ENCODE measurements at regions of chr20 and their contacts with region 1.

Region 1: GRCh38 chr20:44866703-44867335 is 18.7 kb upstream of the YWHAB start:
- DNase-seq: no peak
- ATAC-seq: no peak
- H3K4me3 ChIP-seq: no peak overlapping the region
- H3K27ac ChIP-seq: no peak overlapping the region
- H3K4me1 ChIP-seq: no peaks in the 10 kb centered on the region
- H3K27me3 ChIP-seq: peaks cover 3 to 33% of the 10 kb centered on the region in 2 experiments; a peak in 4 of 5 replicates
- CTCF ChIP-seq: no peak
- EP300 ChIP-seq: no peak
- POLR2A ChIP-seq: no peak
- RAD21 ChIP-seq: no peak

Region 2: GRCh38 chr20:44683263-44684046 is 183.4 kb before region 1 on chr20:
- CTCF ChIA-PET with region 1: interaction called, 44 read pairs
- POLR2A ChIA-PET with region 1: no interaction called
- in situ Hi-C with region 1: loop called (anchors 5 kb)
- intact Hi-C with region 1: loop called (anchors 1 kb)
- DNase-seq: peak; percentile 63
- ATAC-seq: peak; percentile 80
- H3K4me3 ChIP-seq: no peak overlapping the region
- H3K27ac ChIP-seq: no peak overlapping the region
- H3K4me1 ChIP-seq: peaks cover 15% of the 10 kb centered on the region
- H3K27me3 ChIP-seq: peaks cover 0 to 3% of the 10 kb centered on the region in 2 experiments; a peak in 2 of 5 replicates
- CTCF ChIP-seq: peak; percentile 85
- EP300 ChIP-seq: no peak
- POLR2A ChIP-seq: no peak
- RAD21 ChIP-seq: peak; percentile 52; the same call in 1 of the 2 replicates

Region 3: GRCh38 chr20:44739942-44740341 is 126.9 kb before region 1 on chr20:
- CTCF ChIA-PET with region 1: no interaction called
- POLR2A ChIA-PET with region 1: no interaction called
- in situ Hi-C with region 1: loop called (anchors 5 kb)
- intact Hi-C with region 1: no loop called
- DNase-seq: no peak
- ATAC-seq: no peak
- H3K4me3 ChIP-seq: no peak overlapping the region
- H3K27ac ChIP-seq: no peak overlapping the region
- H3K4me1 ChIP-seq: peaks cover 14% of the 10 kb centered on the region
- H3K27me3 ChIP-seq: peaks cover 7 to 30% of the 10 kb centered on the region in 2 experiments; a peak in 4 of 5 replicates
- CTCF ChIP-seq: no peak
- EP300 ChIP-seq: no peak
- POLR2A ChIP-seq: no peak
- RAD21 ChIP-seq: no peak

Region 4: GRCh38 chr20:44747166-44748004 is 119.4 kb before region 1 on chr20:
- CTCF ChIA-PET with region 1: interaction called, 41 read pairs
- POLR2A ChIA-PET with region 1: no interaction called
- in situ Hi-C with region 1: loop called (anchors 5 kb)
- intact Hi-C with region 1: loop called (anchors 1 kb)
- DNase-seq: peak; percentile 64
- ATAC-seq: peak; percentile 67
- H3K4me3 ChIP-seq: no peak overlapping the region
- H3K27ac ChIP-seq: no peak overlapping the region
- H3K4me1 ChIP-seq: peaks cover 26% of the 10 kb centered on the region
- H3K27me3 ChIP-seq: peaks cover 33 to 91% of the 10 kb centered on the region in 2 experiments
- CTCF ChIP-seq: peak; percentile 91
- EP300 ChIP-seq: no peak
- POLR2A ChIP-seq: no peak
- RAD21 ChIP-seq: peak; percentile 62; the same call in 1 of the 2 replicates

Region 5: DNA sequence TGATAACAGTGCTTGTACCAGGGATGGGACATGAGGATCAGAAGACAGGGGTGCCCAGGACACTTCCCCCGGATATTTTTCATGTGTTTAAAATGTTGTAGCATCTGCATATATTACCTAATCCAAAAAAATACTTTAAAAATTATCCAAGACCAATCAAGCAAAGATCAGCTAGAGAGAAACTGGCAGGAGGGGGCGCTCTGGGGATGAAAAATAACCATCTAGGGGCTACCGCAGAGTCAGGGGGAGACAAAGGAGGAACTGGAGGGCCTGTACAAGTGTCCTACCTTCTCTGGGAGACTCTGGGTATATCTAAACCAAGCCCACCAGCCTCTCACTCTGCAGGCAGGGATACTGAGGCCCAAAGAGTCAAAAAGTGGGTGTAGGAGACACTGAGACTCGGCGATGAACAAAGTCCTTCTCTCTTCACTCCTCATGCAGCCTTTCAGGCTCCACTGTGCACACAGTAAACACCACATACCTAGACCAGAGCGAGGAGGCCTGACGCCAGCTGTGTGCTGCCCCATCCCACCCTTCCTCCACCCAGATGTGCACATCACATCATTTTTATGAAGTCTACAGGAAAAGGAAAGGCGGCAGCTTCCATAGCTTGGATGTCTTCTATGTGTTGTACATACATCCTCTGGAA is 66.3 kb before region 1 on chr20:
- CTCF ChIA-PET with region 1: interaction called, 12 read pairs
- POLR2A ChIA-PET with region 1: no interaction called
- in situ Hi-C with region 1: loop called (anchors 5 kb)
- intact Hi-C with region 1: loop called (anchors 1 kb)
- DNase-seq: peak; percentile 25
- ATAC-seq: peak; percentile 59
- H3K4me3 ChIP-seq: no peak overlapping the region
- H3K27ac ChIP-seq: no peak overlapping the region
- H3K4me1 ChIP-seq: 0 out of 2 replicates have a peak, but pooled peaks cover 6% of the 10 kb centered on the region
- H3K27me3 ChIP-seq: peaks cover 0 to 40% of the 10 kb centered on the region in 2 experiments; a peak in 2 of 5 replicates
- CTCF ChIP-seq: peak; percentile 46
- EP300 ChIP-seq: no peak
- POLR2A ChIP-seq: no peak
- RAD21 ChIP-seq: no peak